ENCODE measurements at regions of chr1 and their contacts with region 1.

Region 1: DNA sequence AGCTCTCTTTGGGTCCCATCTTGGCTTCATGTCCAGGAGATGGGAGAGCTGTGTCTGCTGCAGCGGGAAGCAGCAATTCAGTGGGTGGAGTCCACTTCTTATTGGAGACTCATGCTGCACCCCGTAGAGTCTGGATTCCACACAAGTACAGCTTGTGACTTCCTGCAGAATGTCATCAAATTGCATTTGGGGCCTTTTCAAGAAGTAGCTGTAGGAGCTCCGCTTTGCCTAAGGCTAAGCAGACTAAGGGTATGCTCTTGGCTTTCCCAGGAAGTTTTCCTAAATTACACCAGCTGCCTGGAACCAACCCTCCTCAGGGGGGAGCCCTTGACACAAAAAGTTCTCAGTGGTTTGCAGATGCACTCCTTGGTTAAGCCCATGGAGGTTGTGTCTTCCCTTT is 5.7 kb upstream of the MOB3C start:
- DNase-seq: peak in 1 of 2 experiments; percentile 49
- H3K4me3 ChIP-seq: no peak overlapping the region
- H3K4me3 Mint-ChIP-seq: no peak overlapping the region
- H3K27ac Mint-ChIP-seq: no peak overlapping the region
- H3K4me1 ChIP-seq: peaks cover 9% of the 10 kb centered on the region; the same call in 1 of the 2 replicates
- H3K4me1 Mint-ChIP-seq: peaks cover 9% of the 10 kb centered on the region
- H3K27me3 ChIP-seq: no peaks in the 10 kb centered on the region
- H3K27me3 Mint-ChIP-seq: no peaks in the 10 kb centered on the region
- CTCF ChIP-seq: peak in 1 of 2 experiments; percentile 40

Region 2: DNA sequence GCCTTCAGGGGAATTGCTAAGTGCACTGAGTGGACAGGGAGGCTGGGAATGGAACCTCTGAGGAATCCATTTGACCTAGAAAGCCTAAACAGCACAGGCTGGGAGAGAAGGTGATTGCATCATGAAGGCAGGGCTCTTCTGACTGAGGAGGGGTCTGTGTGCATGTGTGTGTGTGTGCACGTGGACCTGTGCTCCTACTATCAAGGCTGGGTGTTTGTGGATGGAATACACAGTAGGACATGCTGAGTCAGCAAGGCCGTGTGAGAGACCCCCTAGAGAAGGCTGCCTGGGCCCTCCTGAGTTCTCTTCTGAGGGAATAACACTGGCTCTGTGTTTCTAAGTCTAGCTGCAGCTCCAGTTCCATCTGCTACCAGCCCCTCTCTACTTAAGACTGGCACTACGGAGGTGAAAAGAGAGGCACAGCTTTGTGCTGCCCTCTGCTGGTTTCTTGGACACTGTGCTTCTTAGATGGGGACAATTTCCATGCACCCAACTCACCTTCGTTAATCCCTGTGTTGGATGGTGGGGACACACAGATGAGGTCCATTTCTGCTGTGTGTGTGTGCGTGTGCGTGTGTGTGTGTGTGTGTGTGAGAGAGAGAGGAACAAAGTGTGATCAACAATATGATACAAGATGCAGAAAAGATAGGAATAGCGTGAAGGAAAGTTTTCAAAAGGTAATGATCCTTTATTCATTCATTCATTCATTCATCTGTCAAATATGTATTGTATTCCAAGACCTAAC is 102.8 kb after region 1 on chr1:
- CTCF ChIA-PET with region 1: interaction called, 6 read pairs
- POLR2A ChIA-PET with region 1: no interaction called
- intact Hi-C with region 1: loop called (anchors 1 kb)
- DNase-seq: peak; percentile 58 to 61
- H3K4me3 ChIP-seq: no peak overlapping the region
- H3K4me3 Mint-ChIP-seq: no peak overlapping the region
- H3K27ac Mint-ChIP-seq: no peak overlapping the region
- H3K4me1 ChIP-seq: no peaks in the 10 kb centered on the region
- H3K4me1 Mint-ChIP-seq: no peaks in the 10 kb centered on the region
- H3K27me3 ChIP-seq: no peaks in the 10 kb centered on the region
- H3K27me3 Mint-ChIP-seq: no peaks in the 10 kb centered on the region
- CTCF ChIP-seq: peak; percentile 61 to 71

Measured in Caco-2 (cell line).